T-cell (primary cell): ENCODE measurements at regions of chr17 and their contacts with region 1.

Region 1: DNA sequence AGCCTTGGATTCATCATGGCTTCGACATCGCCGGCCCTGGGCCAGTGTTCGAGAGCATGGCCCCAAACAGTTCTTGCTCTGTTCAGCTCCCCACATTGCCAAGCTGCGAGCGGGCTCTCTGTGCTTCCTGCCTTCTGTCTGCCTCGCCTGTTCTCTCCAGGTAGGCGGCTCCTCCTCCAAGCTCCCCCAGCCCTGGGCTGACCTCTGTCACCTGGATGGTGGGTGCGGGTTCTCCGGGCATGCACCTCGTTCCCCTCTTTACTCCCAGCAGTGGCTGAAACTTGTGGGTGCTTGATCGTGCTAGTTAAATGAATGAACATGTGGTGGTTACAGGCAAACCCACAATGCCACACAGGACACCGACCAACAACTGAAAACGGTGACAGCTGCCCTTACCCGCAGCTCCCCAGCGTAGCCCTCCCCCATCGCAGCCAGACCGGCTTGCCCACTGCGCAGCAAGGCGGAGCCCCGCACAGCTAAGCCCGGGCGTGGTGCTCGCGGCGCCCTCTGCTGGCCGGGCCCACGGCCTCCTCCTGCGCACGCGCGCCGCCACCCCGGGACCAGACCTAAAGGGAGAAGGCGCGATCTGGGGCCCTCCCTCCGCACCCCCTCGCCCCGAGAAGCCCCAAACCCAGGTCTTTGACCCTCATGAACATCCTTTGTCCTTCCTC is 23.0 kb upstream of the EIF1 start:
- DNase-seq: peak; percentile 64 to 94 (median 82)
- ATAC-seq: peak; percentile 80 to 86 (median 84)
- H3K4me3 ChIP-seq: peak overlapping the region; percentile 75 to 85
- H3K4me3 Mint-ChIP-seq: peak overlapping the region; percentile 79 to 99 (median 87)
- H3K27ac ChIP-seq: peak overlapping the region; percentile 98
- H3K27ac Mint-ChIP-seq: peak overlapping the region; percentile 96 to 98
- H3K4me1 ChIP-seq: peaks cover 7 to 36% of the 10 kb centered on the region in 2 experiments
- H3K4me1 Mint-ChIP-seq: peaks cover 21 to 28% (median 27%) of the 10 kb centered on the region in 3 donors
- H3K27me3 ChIP-seq: no peaks in the 10 kb centered on the region
- H3K27me3 Mint-ChIP-seq: no peaks in the 10 kb centered on the region

Region 2: DNA sequence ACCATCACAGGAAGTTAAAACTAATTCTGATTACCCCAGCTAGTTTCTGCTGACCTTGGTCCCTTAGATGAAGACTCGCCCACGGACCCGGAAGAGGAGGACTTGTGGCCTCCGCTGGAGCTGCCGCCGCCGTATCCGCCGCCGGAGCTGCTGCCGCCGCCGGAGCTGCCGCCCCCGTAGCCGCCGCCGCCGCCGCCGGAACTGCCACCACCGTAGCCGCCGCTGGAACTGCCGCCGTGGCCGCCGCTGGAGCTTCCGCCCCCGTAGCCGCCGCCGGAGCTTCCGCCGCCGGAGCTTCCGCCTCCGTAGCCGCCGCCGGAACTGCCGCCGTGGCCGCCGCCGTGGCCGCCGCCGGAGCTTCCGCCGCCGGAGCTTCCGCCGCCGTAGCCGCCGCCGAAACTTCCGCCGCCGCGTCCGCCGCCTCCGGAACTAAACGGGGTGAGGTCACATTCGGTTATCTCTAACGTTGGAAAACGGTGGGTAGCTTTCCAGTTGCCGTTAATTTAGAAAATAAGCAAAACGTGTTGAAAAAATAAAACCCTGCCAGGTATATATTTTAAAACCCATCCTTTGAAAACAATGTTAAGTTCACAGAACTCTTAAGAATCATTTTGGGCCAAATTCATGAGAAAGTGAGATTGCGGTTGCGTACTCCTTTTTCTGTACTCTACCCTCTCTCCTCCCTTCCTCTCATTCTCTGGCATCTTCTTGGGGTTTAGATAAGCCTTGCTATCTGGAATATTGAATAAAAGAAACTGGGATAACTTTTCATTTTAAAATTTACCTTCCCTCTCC is 846.8 kb before region 1 on chr17:
- CTCF ChIA-PET with region 1: interaction called in 1 of 2 experiments, 13 read pairs
- POLR2A ChIA-PET with region 1: interaction called in 1 of 2 experiments, 3 read pairs
- DNase-seq: peak; percentile 67 to 96 (median 80)
- ATAC-seq: peak; percentile 89 to 95 (median 90)
- H3K4me3 ChIP-seq: peak overlapping the region; percentile 71 to 76
- H3K4me3 Mint-ChIP-seq: peak overlapping the region; percentile 92 to 94 (median 94)
- H3K27ac ChIP-seq: peak overlapping the region; percentile 83
- H3K27ac Mint-ChIP-seq: peak overlapping the region; percentile 95 to 96
- H3K4me1 ChIP-seq: peaks cover 6 to 10% of the 10 kb centered on the region in 2 experiments
- H3K4me1 Mint-ChIP-seq: peaks cover 20 to 31% (median 27%) of the 10 kb centered on the region in 3 donors
- H3K27me3 ChIP-seq: peaks cover 0 to 4% of the 10 kb centered on the region in 2 experiments
- H3K27me3 Mint-ChIP-seq: peaks cover 9 to 15% of the 10 kb centered on the region in 2 donors

Region 3: DNA sequence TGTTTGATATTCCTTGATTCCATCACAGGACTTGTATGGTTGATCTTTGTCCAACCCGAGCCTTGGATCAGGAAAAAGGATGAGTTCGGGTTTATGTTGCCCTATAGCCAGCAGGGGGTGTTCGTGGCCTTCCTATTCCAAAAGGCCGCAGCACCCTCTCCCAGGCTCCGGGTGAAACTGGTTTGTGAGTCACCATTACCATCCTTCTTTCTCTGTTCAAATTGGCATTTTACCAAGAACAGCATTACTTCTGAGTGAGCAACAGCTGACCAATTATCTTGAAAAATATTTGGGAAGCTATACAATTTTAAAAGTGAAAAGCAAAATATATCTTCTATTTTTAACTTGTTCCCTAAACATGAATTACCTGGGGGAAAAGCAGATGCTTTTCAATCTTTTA is 756.4 kb before region 1 on chr17:
- CTCF ChIA-PET with region 1: interaction called, 3 to 14 read pairs
- POLR2A ChIA-PET with region 1: no interaction called
- DNase-seq: peak in 34 of 35 experiments; percentile 24 to 80 (median 49)
- ATAC-seq: peak; percentile 80 to 84 (median 82)
- H3K4me3 ChIP-seq: no peak overlapping the region
- H3K4me3 Mint-ChIP-seq: no peak overlapping the region
- H3K27ac ChIP-seq: no peak overlapping the region
- H3K27ac Mint-ChIP-seq: no peak overlapping the region
- H3K4me1 ChIP-seq: no peaks in the 10 kb centered on the region
- H3K4me1 Mint-ChIP-seq: no peaks in the 10 kb centered on the region
- H3K27me3 ChIP-seq: peaks cover 5 to 21% of the 10 kb centered on the region in 2 experiments
- H3K27me3 Mint-ChIP-seq: peaks cover 37 to 49% of the 10 kb centered on the region in 2 donors

Region 4: GRCh38 chr17:41648411-41649195 is 17.1 kb before region 1 on chr17:
- CTCF ChIA-PET with region 1: interaction called, 22 to 103 read pairs
- POLR2A ChIA-PET with region 1: no interaction called
- DNase-seq: peak; percentile 41 to 91 (median 79)
- ATAC-seq: peak; percentile 87 to 92 (median 88)
- H3K4me3 ChIP-seq: peak overlapping the region; percentile 55 to 76
- H3K4me3 Mint-ChIP-seq: peak overlapping the region in 2 of 3 donors; percentile 74 to 75
- H3K27ac ChIP-seq: no peak overlapping the region
- H3K27ac Mint-ChIP-seq: peak overlapping the region in 1 of 2 donors; percentile 49
- H3K4me1 ChIP-seq: peaks cover 2 to 16% of the 10 kb centered on the region in 2 experiments
- H3K4me1 Mint-ChIP-seq: peaks cover 9 to 10% (median 9%) of the 10 kb centered on the region in 3 donors
- H3K27me3 ChIP-seq: peaks cover 0 to 16% of the 10 kb centered on the region in 2 experiments
- H3K27me3 Mint-ChIP-seq: no peaks in the 10 kb centered on the region

Region 5: DNA sequence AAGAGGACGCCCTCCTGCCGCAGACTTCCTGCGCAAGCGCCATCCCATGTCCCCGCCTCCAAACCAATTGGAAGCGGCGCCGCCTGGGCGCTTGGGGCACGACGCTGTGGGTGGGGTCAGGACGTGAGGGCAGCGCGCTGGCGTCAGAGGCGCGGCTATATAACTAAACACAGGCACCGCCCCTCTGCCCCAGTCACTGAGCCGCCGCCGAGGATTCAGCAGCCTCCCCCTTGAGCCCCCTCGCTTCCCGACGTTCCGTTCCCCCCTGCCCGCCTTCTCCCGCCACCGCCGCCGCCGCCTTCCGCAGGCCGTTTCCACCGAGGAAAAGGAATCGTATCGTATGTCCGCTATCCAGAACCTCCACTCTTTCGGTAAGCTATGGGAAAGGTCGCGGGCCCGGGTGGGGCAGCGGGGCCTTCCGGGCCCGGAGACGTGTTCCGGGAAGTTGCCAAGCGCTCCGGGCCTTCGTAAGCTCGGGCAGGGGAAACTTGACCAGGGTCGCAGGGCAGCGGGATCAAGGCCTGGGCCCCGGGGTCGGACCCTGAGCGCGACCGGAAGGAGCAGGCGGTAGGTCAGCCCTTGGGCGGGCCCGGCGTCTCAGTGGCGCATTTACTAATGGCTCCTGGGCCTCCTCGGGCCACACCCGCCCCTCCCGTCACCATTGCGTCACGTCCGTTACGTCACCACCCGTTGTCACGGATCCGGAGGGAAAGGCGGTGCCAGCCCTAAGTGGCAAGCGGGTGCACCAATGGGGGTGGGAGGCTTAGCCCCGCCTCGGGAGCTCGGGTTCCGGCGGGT is 23.2 kb after region 1 on chr17 and contains the start of gene EIF1:
- CTCF ChIA-PET with region 1: interaction called, 6 to 32 read pairs
- POLR2A ChIA-PET with region 1: interaction called, 7 to 29 read pairs
- DNase-seq: peak; percentile 98 to 100 (median 99)
- ATAC-seq: peak; percentile 79 to 87 (median 82)
- H3K4me3 ChIP-seq: peak within 1 kb of the TSS; percentile 74 to 90
- H3K4me3 Mint-ChIP-seq: peak within 1 kb of the TSS; percentile 94 to 97 (median 95)
- H3K27ac ChIP-seq: peak within 1 kb of the TSS; percentile 98
- H3K27ac Mint-ChIP-seq: peak within 1 kb of the TSS; percentile 95 to 99
- H3K4me1 ChIP-seq: peaks cover 19 to 29% of the 10 kb centered on the region in 2 experiments
- H3K4me1 Mint-ChIP-seq: peaks cover 37 to 44% (median 41%) of the 10 kb centered on the region in 3 donors
- H3K27me3 ChIP-seq: no peaks in the 10 kb centered on the region
- H3K27me3 Mint-ChIP-seq: no peaks in the 10 kb centered on the region
- total RNA-seq, gene EIF1: 962 to 2,431 (median 988) TPM